ENCODE measurements at regions of chr1 and their contacts with region 1.

Region 1: GRCh38 chr1:222455188-222455879 is 92.6 kb downstream of the HHIPL2 start:
- DNase-seq: peak; percentile 86
- H3K4me3 ChIP-seq: peak overlapping the region; percentile 26
- H3K27ac ChIP-seq: peak overlapping the region; percentile 43
- H3K4me1 ChIP-seq: peaks cover 13% of the 10 kb centered on the region
- H3K27me3 ChIP-seq: no peaks in the 10 kb centered on the region
- CTCF ChIP-seq: peak; percentile 96

Region 2: DNA sequence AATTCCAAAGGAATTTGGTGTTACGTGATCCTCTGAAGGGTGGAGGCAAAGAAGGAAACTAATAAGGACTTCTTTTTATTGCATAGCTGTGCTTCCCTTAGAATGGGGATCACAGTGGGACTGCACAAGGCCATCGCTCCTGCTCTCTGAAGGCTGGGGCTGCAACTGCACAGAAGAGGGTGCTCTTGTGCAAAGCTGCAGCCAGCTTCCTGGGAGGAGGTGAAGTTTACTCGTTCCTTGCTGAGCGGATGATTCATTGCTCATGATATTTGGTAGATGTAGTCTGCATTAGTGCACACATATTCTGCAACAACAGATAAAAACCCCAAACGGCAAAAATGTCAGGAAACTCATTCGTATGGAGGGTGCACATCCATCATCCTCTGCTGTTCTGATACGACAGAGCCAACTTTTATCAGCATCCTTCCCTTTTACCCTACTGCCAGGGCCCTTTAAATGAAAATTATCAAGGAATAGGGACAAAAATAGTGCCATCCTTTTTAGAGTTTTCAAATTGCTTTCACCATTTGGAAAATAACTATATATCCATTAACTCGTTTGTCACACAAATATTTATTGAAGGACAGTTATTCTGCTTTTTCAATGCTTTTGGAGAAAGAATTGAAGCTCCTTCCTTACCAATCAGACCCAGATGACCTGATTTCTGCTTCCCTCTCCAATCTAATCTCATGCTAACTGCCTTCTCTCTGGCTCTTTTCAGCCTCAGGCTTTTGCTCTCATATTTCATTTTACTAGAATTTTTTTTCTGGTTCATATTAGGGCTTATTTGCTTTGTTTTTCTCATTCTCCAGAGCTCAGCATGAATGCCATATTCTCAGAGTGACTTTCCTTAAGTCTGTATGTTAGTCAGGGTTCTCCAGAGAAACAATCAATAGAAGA is 977.0 kb before region 1 on chr1:
- intact Hi-C with region 1: loop called (anchors 10 kb)
- DNase-seq: peak; percentile 48
- H3K4me3 ChIP-seq: no peak overlapping the region
- H3K27ac ChIP-seq: no peak overlapping the region
- H3K4me1 ChIP-seq: no peaks in the 10 kb centered on the region
- H3K27me3 ChIP-seq: peaks cover 19% of the 10 kb centered on the region
- CTCF ChIP-seq: peak; percentile 69

Region 3: GRCh38 chr1:222095606-222096475 is 359.5 kb before region 1 on chr1:
- intact Hi-C with region 1: loop called (anchors 10 kb)
- DNase-seq: peak; percentile 23
- H3K4me3 ChIP-seq: no peak overlapping the region
- H3K27ac ChIP-seq: no peak overlapping the region
- H3K4me1 ChIP-seq: peaks cover 17% of the 10 kb centered on the region
- H3K27me3 ChIP-seq: no peaks in the 10 kb centered on the region
- CTCF ChIP-seq: peak; percentile 78